Naive thymus-derived CD8-positive, alpha-beta T cell (primary cell): ENCODE measurements at regions of chr2 and their contacts with region 1.

Region 1: GRCh38 chr2:25286025-25286400 is 55.7 kb downstream of the DNMT3A start:
- DNase-seq: peak; percentile 43 to 88 (median 73)
- ATAC-seq: peak; percentile 98 to 100
- H3K4me3 Mint-ChIP-seq: peak overlapping the region; percentile 66 to 91 (median 78)
- H3K27ac Mint-ChIP-seq: peak overlapping the region; percentile 96 to 100 (median 99)
- H3K4me1 Mint-ChIP-seq: peaks cover 27 to 80% (median 65%) of the 10 kb centered on the region in 4 donors
- H3K27me3 Mint-ChIP-seq: no peaks in the 10 kb centered on the region

Region 2: DNA sequence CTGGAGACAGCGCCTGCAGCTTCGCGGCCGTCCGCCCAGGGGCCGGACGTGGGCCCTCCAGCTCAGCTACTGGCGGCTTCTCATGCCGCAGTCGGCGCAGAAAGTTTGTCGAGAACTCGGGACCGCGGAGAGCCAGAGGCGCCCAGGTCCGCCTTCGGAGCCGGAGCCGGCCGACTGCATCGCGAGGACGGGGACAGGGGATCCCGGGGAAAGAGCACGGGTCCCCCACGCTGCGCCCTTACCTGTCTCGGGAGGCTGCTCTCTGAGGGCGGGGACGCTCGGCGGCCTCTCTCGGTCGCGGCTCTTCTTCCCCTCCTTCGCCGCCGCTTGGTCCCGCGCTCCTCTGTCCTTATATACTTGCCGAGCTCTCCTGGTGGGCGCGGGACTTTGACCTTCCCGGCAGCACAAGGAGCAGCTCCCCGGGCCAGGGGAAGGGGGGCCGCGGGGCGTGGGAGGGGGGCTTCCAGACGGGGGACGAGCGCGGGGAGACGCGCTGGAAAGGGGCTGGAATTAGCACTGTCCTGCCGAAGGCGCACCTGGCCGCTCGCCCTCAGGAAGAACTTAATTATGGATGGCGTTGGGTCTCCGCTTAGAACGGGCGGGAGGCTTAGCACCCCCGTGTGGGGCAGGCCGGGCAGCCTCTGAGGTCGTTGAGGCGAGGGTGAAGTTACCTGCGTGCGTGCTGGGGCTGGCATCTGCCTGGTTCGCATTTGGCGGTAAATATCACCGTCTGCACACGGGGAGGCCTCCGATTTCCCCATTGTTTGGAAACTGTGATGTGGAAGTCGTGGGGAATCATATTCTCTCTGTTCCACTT is 117.5 kb before region 1 on chr2 and contains the start of gene POMC:
- POLR2A ChIA-PET with region 1: no interaction called
- DNase-seq: peak in 8 of 10 donors; percentile 16 to 48 (median 31)
- ATAC-seq: peak; percentile 69 to 75
- H3K4me3 Mint-ChIP-seq: peak within 1 kb of the TSS; percentile 66 to 91 (median 70)
- H3K27ac Mint-ChIP-seq: peak within 1 kb of the TSS in 5 of 10 donors; percentile 28 to 80 (median 52)
- H3K4me1 Mint-ChIP-seq: peaks cover 10 to 36% (median 26%) of the 10 kb centered on the region in 4 donors
- H3K27me3 Mint-ChIP-seq: peaks cover 16 to 41% (median 27%) of the 10 kb centered on the region in 5 donors
- polyA plus RNA-seq, gene POMC: 4.9 to 15.2 (median 13.0) TPM

Region 3: DNA sequence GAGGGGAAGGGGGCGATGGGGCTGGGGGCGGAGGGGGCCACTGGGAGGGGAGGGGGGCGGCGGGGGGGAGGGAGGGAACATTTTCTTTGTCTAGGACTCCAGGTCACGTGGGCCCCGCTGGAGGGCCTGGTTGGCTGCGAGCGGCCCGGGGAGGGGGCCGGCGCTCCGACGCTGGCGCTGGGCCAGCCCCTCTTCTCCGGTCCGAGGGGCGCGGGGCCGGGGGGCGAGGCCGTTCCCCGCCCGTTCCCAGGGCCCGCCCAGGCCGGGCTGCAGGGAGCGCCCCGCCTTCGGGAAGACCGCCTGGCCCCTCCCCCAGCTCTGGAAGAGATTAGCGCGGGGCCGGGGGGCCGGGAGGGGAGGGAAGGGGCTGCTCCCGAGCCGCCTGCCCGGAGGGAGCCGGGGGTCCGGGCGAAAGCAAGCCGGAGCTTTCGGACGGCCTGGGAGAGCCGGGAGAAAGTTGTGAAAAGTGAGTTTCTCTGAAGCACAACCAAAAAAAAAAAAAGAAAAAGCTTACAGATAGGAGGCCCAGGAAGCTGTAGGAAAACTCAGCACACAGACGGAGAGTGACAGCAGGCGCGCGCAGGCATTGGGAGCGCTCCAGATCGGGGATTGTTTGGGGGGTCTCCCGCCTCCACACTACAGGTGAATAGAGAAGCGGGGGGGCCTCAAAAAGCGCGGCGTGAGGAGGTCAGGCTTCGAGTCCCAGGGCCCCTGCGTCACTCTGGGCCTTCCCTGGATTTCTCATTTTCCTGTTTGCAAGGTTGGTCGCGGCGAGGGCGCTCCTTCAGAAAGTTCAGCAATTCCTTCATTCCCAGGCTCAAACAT is 33.5 kb before region 1 on chr2:
- POLR2A ChIA-PET with region 1: interaction called, 26 read pairs
- DNase-seq: peak; percentile 35 to 72 (median 49)
- ATAC-seq: peak; percentile 46 to 56
- H3K4me3 Mint-ChIP-seq: peak overlapping the region; percentile 83 to 95 (median 91)
- H3K27ac Mint-ChIP-seq: peak overlapping the region; percentile 85 to 96 (median 91)
- H3K4me1 Mint-ChIP-seq: peaks cover 42 to 62% (median 53%) of the 10 kb centered on the region in 4 donors
- H3K27me3 Mint-ChIP-seq: no peaks in the 10 kb centered on the region

Region 4: DNA sequence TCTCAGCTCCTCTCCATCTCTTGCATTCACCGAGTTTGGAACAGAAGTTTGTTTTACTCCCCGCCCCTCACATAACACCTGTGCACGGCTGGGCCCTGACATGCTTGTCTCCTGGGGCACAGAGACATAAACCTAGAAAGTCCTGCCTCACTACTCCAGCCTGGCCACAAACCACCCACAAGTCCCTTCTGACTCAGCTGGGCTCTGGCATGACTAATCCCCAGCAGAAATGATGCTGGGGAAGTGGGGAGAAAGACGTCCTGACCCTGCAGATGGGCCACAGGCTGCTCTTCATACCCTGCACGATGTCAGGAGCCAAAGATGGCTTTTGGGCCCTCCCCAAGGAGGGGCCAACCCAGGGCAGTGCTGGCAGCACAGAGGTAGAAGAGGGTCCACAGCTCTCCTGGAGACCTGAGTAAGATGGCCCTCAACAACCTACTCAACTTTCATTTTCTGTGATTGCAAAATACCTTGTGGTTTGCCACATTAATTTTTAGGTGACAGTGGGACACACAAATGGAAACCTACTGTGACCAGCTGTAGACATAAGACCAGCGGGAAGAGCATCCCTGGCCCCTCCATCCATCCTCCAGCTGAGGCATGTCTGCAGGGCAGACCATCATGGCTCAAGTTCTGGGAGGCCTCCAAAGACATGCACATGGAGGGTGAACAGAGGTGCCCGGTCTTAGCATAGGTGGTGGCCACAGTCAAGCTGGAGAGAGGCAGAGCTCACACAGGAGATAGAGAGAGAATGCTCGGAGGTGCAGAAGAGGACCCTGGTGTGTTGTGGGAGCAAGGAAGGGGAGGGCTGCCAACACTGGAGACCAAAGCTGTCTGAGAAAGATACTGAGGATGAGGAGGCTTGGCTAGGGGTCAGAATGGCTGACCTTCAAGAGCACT is 15.7 kb after region 1 on chr2:
- POLR2A ChIA-PET with region 1: interaction called, 358 read pairs
- DNase-seq: peak in 1 of 10 donors; percentile 58
- ATAC-seq: peak; percentile 2 to 62
- H3K4me3 Mint-ChIP-seq: peak overlapping the region in 6 of 10 donors; percentile 18 to 56 (median 42)
- H3K27ac Mint-ChIP-seq: peak overlapping the region; percentile 42 to 96 (median 88)
- H3K4me1 Mint-ChIP-seq: peaks cover 30 to 71% (median 61%) of the 10 kb centered on the region in 4 donors
- H3K27me3 Mint-ChIP-seq: no peaks in the 10 kb centered on the region

Region 5: GRCh38 chr2:25314514-25315315 is 28.7 kb after region 1 on chr2:
- POLR2A ChIA-PET with region 1: interaction called, 24 read pairs
- DNase-seq: peak in 9 of 10 donors; percentile 39 to 78 (median 63)
- ATAC-seq: peak; percentile 83 to 88
- H3K4me3 Mint-ChIP-seq: peak overlapping the region; percentile 45 to 85 (median 79)
- H3K27ac Mint-ChIP-seq: peak overlapping the region; percentile 87 to 96 (median 93)
- H3K4me1 Mint-ChIP-seq: peaks cover 32 to 83% (median 72%) of the 10 kb centered on the region in 4 donors
- H3K27me3 Mint-ChIP-seq: no peaks in the 10 kb centered on the region

Region 6: DNA sequence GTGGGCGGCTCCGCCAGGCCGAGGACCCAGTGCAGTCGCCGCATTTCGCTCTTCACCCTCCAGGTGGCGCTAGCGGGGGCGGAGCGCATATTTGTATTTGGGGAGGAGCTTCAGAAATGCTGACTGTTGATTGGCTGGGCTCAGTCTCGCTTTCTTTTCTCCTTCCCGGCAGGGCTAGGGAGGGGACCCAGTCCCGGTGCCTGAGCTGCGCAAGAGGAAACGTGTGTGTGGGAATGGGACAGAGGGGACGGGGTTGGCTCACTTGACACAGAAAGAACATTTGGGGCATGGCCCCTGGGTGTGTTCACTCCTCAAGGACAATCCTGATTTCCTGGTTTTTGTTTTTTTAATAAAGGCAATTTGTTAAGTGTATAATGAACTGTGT is 76.0 kb after region 1 on chr2:
- POLR2A ChIA-PET with region 1: interaction called, 12 read pairs
- DNase-seq: peak; percentile 85 to 99 (median 93)
- ATAC-seq: peak; percentile 89 to 97
- H3K4me3 Mint-ChIP-seq: peak overlapping the region; percentile 89 to 99 (median 94)
- H3K27ac Mint-ChIP-seq: peak overlapping the region; percentile 85 to 100 (median 94)
- H3K4me1 Mint-ChIP-seq: peaks cover 11 to 21% (median 19%) of the 10 kb centered on the region in 4 donors
- H3K27me3 Mint-ChIP-seq: no peaks in the 10 kb centered on the region